Sigmoid colon (tissue), 7 donors: ENCODE measurements at regions of chrX and their contacts with region 1.

Region 1: DNA sequence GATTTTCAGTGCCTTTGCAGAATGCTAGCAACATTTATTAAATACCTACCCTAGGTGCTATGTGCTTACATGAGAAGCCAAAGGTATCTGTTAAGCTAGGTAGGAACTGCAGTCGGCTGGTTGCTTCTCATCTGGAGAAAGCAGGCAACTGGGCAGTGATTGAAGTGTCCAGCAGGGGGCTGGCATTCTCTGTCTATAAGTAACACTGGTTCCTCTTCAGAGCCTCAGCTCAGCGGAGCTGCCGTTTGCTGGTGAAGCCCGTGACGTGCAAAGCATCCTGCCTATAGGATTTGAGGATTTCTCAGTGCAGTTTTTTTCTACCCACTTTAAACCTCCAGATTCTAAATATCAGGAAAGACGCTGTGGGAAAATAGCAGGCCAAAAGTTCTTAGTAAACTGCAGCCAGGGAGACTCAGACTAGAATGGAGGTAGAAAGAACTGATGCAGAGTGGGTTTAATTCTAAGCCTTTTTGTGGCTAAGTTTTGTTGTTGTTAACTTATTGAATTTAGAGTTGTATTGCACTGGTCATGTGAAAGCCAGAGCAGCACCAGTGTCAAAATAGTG is at the start of gene GRPR:
- DNase-seq: peak; percentile 84
- H3K4me3 ChIP-seq: peak within 1 kb of the TSS in 1 of 4 donors; percentile 9
- H3K27ac ChIP-seq: peak within 1 kb of the TSS in 1 of 4 donors; percentile 31
- H3K4me1 ChIP-seq: peaks cover 0 to 5% (median 0%) of the 10 kb centered on the region in 4 donors
- H3K27me3 ChIP-seq: no peaks in the 10 kb centered on the region
- CTCF ChIP-seq: peak in 3 of 4 experiments; percentile 42 to 53 (median 45)
- EP300 ChIP-seq: no peak
- POLR2A ChIP-seq: no peak
- total RNA-seq, gene GRPR: 0.54 to 2.8 (median 1.1) TPM

Region 2: DNA sequence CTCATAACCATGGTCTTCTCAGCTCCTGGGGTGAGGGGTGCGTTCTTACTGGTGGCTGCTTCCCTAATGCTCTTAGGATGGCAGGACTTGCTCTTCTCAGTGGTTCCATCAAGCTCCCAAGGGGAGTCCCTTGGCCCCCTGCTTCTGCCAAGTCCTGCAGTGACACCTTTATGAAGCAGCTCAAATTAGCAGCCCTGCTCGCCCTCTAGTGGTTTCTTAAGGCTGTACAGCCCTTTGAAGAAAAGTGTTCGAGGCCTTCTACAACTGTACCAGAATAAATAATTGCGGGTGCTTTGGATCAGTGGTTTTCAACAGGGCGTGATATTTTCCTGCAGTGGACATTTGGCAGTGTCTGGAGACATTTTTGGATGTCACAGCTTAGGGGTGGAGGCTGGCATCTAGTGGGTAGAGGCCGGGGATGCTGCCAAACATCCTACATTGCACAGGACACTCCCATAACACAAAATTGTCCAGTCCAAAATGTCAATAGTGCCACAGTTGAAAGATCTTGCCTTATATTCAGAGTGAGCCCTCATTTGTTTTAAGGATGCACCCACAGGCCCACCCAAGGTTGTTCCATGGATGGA is 322.0 kb after region 1 on chrX:
- intact Hi-C with region 1: loop called (anchors 10 kb)
- DNase-seq: no peak
- H3K4me3 ChIP-seq: no peak overlapping the region
- H3K27ac ChIP-seq: no peak overlapping the region
- H3K4me1 ChIP-seq: no peaks in the 10 kb centered on the region
- H3K27me3 ChIP-seq: no peaks in the 10 kb centered on the region
- CTCF ChIP-seq: peak; percentile 11 to 52 (median 29)
- EP300 ChIP-seq: no peak
- POLR2A ChIP-seq: no peak